Breast epithelium (tissue), 4 donors: ENCODE measurements at regions of chr3 and their contacts with region 1.

Region 1: DNA sequence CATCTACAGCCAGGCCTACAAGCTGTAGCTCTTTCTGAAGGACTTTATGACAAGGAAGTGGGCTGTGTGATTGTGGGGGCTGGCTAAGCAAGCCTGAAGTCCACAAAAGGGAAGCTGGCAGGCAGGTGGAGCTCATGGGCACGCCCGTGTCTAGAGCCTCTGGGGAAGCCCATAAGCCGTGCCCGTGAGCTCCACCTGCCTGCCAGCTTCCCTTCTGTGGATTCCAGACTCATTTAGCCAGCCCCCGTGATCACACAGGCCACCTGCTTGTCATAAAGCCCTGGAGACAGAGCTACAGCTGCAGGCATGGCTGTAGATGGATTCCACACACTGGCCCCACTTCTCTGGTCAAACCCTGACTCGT is 15.2 kb downstream of the EFCC1 start:
- DNase-seq: no peak
- H3K4me3 ChIP-seq: no peak overlapping the region
- H3K27ac ChIP-seq: peak overlapping the region; percentile 14 to 78
- H3K4me1 ChIP-seq: no peaks in the 10 kb centered on the region
- H3K27me3 ChIP-seq: no peaks in the 10 kb centered on the region
- CTCF ChIP-seq: no peak
- POLR2A ChIP-seq: no peak

Region 2: GRCh38 chr3:128487813-128488635 is 528.3 kb before region 1 on chr3:
- intact Hi-C with region 1: loop called (anchors 5 kb)
- DNase-seq: peak; percentile 56 to 72
- H3K4me3 ChIP-seq: peak overlapping the region; percentile 50 to 76 (median 55)
- H3K27ac ChIP-seq: peak overlapping the region in 1 of 2 donors; percentile 77
- H3K4me1 ChIP-seq: peaks cover 17 to 21% of the 10 kb centered on the region in 2 donors
- H3K27me3 ChIP-seq: peaks cover 8 to 100% of the 10 kb centered on the region in 2 donors
- CTCF ChIP-seq: no peak
- POLR2A ChIP-seq: no peak

Region 3: DNA sequence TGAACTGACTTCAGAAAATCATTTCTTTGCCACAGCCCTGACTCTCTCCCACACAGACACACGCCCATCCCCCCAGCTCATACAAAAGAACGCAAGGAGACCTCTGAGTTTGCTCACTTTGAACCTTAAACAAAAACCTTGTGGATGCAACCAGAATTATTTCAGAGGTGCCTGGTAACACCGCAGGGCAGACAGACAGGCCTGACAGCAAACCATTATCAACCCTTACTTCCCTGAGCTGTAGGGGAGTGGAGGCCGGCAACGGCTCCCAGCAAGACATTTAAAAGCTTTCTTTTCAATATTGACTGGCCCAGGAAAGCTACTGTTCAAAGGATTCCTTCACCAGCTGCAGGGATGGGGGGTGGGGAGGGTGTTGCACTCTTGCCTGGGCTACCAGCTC is 17.2 kb before region 1 on chr3:
- intact Hi-C with region 1: loop called (anchors 1 kb)
- DNase-seq: no peak
- H3K4me3 ChIP-seq: no peak overlapping the region
- H3K27ac ChIP-seq: no peak overlapping the region
- H3K4me1 ChIP-seq: peaks cover 7 to 8% of the 10 kb centered on the region in 2 donors
- H3K27me3 ChIP-seq: peaks cover 0 to 27% of the 10 kb centered on the region in 2 donors
- CTCF ChIP-seq: no peak
- POLR2A ChIP-seq: no peak

Region 4: DNA sequence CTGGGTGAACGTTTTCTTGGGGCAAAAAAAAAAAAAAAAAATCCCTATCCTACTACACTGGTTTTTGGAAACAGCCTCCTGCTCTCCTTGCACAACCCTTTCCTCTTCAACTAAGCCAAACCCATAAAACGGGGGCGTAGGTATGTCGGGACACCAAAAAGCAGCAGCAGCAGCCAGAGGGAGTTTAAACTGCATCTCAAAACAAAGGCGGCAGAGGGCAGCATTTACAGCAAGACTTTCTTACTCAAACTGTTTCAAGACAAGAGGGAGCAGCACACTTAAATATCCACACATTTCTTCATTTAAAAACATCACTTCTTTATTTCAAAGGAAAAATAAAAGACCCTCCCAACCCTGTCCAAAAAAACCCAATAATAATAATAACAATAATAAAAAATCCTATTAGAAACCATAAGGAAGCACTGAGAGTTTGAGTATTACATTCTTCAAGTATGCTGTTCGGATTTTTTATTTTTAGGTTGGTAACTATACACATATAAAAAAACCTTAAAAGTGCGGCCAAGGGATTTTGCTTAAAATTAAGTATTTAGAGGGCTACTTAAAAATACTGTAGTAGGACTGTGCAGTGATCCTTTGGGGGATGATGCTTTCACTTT is 634.0 kb after region 1 on chr3:
- intact Hi-C with region 1: no loop called
- DNase-seq: peak; percentile 63 to 89
- H3K4me3 ChIP-seq: no peak overlapping the region
- H3K27ac ChIP-seq: no peak overlapping the region
- H3K4me1 ChIP-seq: no peaks in the 10 kb centered on the region
- H3K27me3 ChIP-seq: no peaks in the 10 kb centered on the region
- CTCF ChIP-seq: peak in 2 of 3 donors; percentile 73 to 83
- POLR2A ChIP-seq: no peak